Heart right ventricle (tissue), 16 donors: ENCODE measurements at regions of chr13 and their contacts with region 1.

Region 1: GRCh38 chr13:29472332-29472961 is 123.0 kb downstream of the SLC7A1 start:
- DNase-seq: peak in 1 of 2 donors; percentile 39
- ATAC-seq: peak in 4 of 8 donors; percentile 39 to 53 (median 52)
- H3K4me3 ChIP-seq: no peak overlapping the region
- H3K27ac ChIP-seq: peak overlapping the region in 1 of 10 donors; percentile 28
- H3K4me1 ChIP-seq: peaks cover 0 to 5% (median 0%) of the 10 kb centered on the region in 9 donors
- H3K27me3 ChIP-seq: peaks cover 0 to 3% (median 0%) of the 10 kb centered on the region in 7 donors
- CTCF ChIP-seq: peak; percentile 42 to 91 (median 72)

Region 2: DNA sequence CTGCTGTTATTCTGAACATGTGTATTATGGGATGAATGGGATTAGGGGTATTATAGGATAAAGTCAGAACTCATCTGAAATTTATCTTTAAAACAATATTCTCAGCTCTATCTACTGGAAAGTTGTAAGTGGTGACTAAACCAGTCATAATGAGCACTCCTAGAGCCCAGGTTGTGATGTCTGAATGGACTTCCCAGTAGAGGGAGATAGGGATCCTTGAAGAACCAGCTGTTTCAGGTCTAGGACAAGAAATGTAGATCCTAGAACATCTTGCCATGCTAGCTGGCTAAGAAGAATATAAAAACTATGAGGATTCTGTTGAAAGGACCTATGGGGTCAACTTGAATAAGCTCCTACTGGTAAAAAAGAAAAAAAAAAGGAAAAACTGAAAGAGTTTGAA is 187.7 kb before region 1 on chr13:
- intact Hi-C with region 1: no loop called
- DNase-seq: no peak
- ATAC-seq: no peak
- H3K4me3 ChIP-seq: no peak overlapping the region
- H3K27ac ChIP-seq: no peak overlapping the region
- H3K4me1 ChIP-seq: peaks cover 0 to 9% (median 0%) of the 10 kb centered on the region in 9 donors
- H3K27me3 ChIP-seq: no peaks in the 10 kb centered on the region
- CTCF ChIP-seq: no peak

Region 3: GRCh38 chr13:29362849-29363604 is 109.4 kb before region 1 on chr13:
- intact Hi-C with region 1: loop called in 1 of 10 experiments (anchors 10 kb)
- DNase-seq: peak in 1 of 2 donors; percentile 24
- ATAC-seq: peak; percentile 67 to 89 (median 82)
- H3K4me3 ChIP-seq: no peak overlapping the region
- H3K27ac ChIP-seq: no peak overlapping the region
- H3K4me1 ChIP-seq: no peaks in the 10 kb centered on the region
- H3K27me3 ChIP-seq: no peaks in the 10 kb centered on the region
- CTCF ChIP-seq: peak; percentile 46 to 87 (median 81)